Caco-2 (cell line): ENCODE measurements at regions of chr10 and their contacts with region 1.

Region 1: GRCh38 chr10:62804356-62805230 is at the start of gene ADO:
- DNase-seq: peak; percentile 88 to 93
- H3K4me3 ChIP-seq: peak within 1 kb of the TSS; percentile 81
- H3K4me3 Mint-ChIP-seq: peak within 1 kb of the TSS; percentile 90
- H3K27ac Mint-ChIP-seq: peak within 1 kb of the TSS; percentile 96
- H3K4me1 ChIP-seq: peaks cover 22% of the 10 kb centered on the region
- H3K4me1 Mint-ChIP-seq: peaks cover 26% of the 10 kb centered on the region
- H3K27me3 ChIP-seq: no peaks in the 10 kb centered on the region
- H3K27me3 Mint-ChIP-seq: no peaks in the 10 kb centered on the region
- CTCF ChIP-seq: peak in 1 of 2 experiments; percentile 50
- total RNA-seq, gene ADO: 31.3 and 34.1 TPM in 2 replicates

Region 2: DNA sequence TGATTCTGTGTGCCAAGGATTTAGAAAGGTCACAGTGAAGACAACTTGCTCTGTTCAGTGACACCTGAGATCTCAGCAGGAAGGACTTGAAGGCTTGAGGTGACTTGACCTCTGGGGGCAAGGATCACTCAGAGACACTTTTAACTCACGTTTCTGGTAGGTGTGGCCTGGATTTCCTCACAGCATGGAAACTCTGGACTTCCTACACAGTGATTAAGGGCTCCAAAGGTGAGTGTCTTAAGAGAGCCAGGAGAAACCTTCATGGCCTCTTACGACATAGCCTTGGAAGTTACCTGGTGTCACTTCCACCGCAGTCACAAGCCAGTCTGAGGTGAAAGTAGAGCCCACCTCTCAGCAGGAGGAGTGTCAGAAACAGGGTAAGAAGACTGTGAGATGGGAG is 38.2 kb before region 1 on chr10:
- CTCF ChIA-PET with region 1: no interaction called
- POLR2A ChIA-PET with region 1: no interaction called
- intact Hi-C with region 1: loop called (anchors 1 kb)
- DNase-seq: peak; percentile 70 to 89
- H3K4me3 ChIP-seq: no peak overlapping the region
- H3K4me3 Mint-ChIP-seq: peak overlapping the region; percentile 2
- H3K27ac Mint-ChIP-seq: peak overlapping the region; percentile 30
- H3K4me1 ChIP-seq: peaks cover 22% of the 10 kb centered on the region
- H3K4me1 Mint-ChIP-seq: peaks cover 23% of the 10 kb centered on the region
- H3K27me3 ChIP-seq: no peaks in the 10 kb centered on the region
- H3K27me3 Mint-ChIP-seq: no peaks in the 10 kb centered on the region
- CTCF ChIP-seq: no peak

Region 3: DNA sequence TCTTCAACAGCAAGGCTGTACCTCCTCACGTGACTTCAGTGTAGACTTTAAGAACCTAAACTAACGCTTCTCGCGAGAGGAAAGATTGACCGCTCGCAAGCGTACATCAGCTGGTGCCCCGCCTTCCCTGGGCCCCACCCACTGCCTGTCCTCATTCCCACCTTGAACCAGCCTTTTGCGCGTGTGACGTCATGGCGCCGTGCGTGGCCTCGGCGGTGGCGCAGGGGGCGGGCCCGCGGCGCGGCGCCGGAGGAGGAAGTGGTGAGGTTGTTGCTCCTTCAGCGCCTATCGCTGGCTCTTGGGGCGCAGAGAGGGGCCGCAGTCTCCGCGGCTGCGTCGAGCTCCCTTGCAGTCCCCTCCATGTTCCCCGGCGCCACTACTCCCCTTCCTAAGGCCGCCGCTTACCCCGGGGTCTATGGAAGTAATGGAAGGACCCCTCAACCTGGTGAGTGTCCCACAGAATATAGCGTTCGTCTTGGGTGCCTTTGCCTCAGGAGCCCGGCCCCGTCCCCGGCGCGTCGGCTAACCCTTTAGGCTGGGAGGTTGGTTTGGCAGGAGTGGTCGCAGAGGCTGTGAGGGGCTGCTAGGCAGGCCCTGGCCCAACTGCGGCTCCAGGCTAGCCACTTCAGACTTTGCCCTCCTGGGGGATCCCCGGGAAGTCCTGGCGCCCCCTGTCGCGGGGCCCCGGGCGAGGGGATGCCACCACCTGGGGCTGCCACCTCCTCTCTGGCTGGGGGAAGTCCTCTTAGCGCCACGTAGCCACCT is 328.6 kb after region 1 on chr10 and contains the start of gene NRBF2:
- CTCF ChIA-PET with region 1: no interaction called
- POLR2A ChIA-PET with region 1: interaction called, 6 read pairs
- intact Hi-C with region 1: loop called (anchors 1 kb)
- DNase-seq: peak; percentile 100
- H3K4me3 ChIP-seq: peak within 1 kb of the TSS; percentile 60
- H3K4me3 Mint-ChIP-seq: peak within 1 kb of the TSS; percentile 94
- H3K27ac Mint-ChIP-seq: peak within 1 kb of the TSS; percentile 91
- H3K4me1 ChIP-seq: peaks cover 14% of the 10 kb centered on the region
- H3K4me1 Mint-ChIP-seq: peaks cover 35% of the 10 kb centered on the region
- H3K27me3 ChIP-seq: no peaks in the 10 kb centered on the region
- H3K27me3 Mint-ChIP-seq: no peaks in the 10 kb centered on the region
- CTCF ChIP-seq: peak; percentile 32 to 71
- total RNA-seq, gene NRBF2: 49.1 and 52.5 TPM in 2 replicates